ENCODE measurements at regions of chr17 and their contacts with region 1.

Region 1: DNA sequence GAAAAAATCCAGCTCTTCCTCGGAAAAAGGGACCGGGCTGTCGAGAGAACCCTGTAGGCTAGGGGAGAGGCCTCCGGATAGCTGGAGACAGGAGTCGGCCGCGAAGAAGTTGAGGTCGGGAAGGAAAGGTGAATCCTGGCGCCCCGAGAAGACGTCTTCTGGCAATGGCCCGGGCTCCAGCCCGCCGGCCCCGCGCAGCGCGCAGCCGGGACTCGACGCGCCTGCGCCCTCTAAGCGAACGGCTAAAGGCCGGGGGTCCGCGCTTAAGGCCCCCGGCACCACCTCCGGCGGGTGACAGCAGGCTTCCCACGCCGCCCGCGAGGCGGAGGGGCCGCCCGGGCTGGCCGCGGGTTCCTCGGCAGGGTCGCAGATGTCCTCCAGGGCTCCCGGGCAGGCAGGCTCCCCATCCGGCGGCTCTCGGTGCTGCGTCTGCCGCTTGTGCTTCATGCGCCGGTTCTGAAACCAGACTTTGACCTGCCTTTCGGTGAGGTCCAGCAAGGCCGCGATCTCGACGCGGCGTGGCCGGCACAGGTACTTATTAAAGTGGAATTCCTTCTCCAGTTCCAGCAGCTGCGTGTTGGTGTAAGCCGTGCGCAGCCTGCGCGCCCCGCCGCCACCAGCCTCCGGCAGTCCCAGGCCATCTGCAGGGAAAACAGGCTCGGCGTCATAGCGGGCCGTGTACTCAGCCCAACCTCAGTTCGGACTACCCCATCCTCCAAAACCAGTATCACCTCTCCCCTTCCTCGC is 1.6 kb downstream of the HOXB2 start:
- DNase-seq: no peak
- H3K4me3 ChIP-seq: peak overlapping the region; percentile 76 to 83
- H3K27ac ChIP-seq: peak overlapping the region; percentile 93 to 97
- H3K4me1 ChIP-seq: peaks cover 6 to 38% of the 10 kb centered on the region in 2 donors
- H3K27me3 ChIP-seq: no peaks in the 10 kb centered on the region
- CTCF ChIP-seq: peak; percentile 10 to 23 (median 12)

Region 2: GRCh38 chr17:48492401-48493298 is 50.6 kb before region 1 on chr17:
- intact Hi-C with region 1: loop called (anchors 5 kb)
- DNase-seq: peak in 1 of 2 donors; percentile 85
- H3K4me3 ChIP-seq: peak overlapping the region; percentile 41 to 60
- H3K27ac ChIP-seq: no peak overlapping the region
- H3K4me1 ChIP-seq: peaks cover 4 to 6% of the 10 kb centered on the region in 2 donors
- H3K27me3 ChIP-seq: no peaks in the 10 kb centered on the region
- CTCF ChIP-seq: peak; percentile 83 to 94 (median 90)

Region 3: DNA sequence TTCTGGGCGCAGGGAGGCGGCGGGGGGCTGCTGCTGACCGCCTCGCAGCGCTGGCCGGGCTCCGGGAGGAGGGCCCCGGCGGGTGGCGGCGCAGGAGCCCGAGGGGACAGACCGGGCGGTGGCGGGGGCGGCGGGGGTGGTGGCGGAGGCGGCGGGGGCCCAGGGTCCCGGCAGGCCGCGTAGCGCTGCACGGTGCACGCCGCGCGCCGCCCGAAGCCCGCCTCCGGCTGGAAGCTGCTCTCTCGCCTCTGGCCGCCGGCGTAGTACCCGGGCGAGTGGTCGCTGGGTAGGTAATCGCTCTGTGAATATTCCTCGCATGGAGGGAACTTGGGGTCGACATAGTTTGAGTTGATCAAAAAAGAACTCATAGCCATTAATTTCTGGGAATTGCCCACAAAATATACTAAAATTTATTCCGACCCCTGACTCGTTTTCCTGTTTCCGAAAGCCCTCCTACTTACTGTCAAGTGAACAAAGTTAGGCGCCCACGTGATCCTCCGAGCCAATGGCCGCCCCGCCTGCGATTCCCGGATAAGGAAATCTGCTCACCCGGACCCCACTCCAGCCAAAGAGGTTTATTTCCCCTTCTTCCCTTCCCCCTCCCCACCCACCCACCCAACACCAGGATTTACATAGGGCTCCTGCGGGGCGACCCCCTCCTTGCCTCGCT is 34.8 kb after region 1 on chr17 and contains the start of gene HOXB4:
- intact Hi-C with region 1: loop called (anchors 1 kb)
- DNase-seq: peak; percentile 60 to 93
- H3K4me3 ChIP-seq: peak within 1 kb of the TSS; percentile 75 to 77
- H3K27ac ChIP-seq: peak within 1 kb of the TSS; percentile 93 to 97
- H3K4me1 ChIP-seq: peaks cover 4 to 46% of the 10 kb centered on the region in 2 donors
- H3K27me3 ChIP-seq: no peaks in the 10 kb centered on the region
- CTCF ChIP-seq: no peak
- total RNA-seq, gene HOXB4: 20.4 TPM